Activated CD4-positive, alpha-beta T cell treated with anti-CD3 and anti-CD28 coated beads for 36 hours (primary cell): ENCODE measurements at regions of chr3 and their contacts with region 1.

Region 1: GRCh38 chr3:122609798-122610559 is 32.5 kb downstream of the PARP15 start:
- DNase-seq: peak; percentile 27
- ATAC-seq: peak; percentile 95
- H3K4me3 Mint-ChIP-seq: peak overlapping the region; percentile 25
- H3K27ac Mint-ChIP-seq: peak overlapping the region; percentile 85
- H3K4me1 Mint-ChIP-seq: peaks cover 24% of the 10 kb centered on the region
- H3K27me3 Mint-ChIP-seq: no peaks in the 10 kb centered on the region

Region 2: DNA sequence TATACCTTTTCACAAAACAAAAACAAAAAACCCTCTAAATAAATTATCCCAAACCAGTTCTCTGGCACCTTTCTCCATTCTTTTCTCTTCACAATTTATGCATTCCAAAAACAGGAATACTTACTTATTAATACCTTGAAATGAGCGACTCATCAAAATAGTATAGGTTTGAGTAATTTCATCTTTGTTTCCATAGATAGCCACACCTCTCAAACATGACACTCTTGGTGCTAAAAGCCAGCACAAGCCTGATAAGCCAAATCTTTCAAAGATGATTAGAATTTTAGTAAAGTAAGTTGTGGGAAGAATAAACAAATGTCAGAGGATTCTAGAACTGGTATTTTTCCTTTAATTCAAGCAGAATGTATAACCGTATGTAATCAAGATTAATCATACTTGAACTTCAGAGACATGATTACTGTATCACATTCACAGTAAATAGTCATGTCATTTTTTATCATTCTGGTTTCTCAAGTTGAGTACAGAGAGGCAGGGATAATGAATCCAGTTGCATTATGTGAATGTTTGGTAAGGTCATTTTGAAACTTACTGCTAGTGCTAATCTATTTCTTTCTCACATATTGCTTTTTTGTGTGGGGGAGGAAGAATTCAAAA is 182.0 kb before region 1 on chr3:
- CTCF ChIA-PET with region 1: no interaction called
- POLR2A ChIA-PET with region 1: no interaction called
- intact Hi-C with region 1: loop called in 1 of 2 experiments (anchors 1 kb)
- DNase-seq: no peak
- ATAC-seq: peak; percentile 93
- H3K4me3 Mint-ChIP-seq: no peak overlapping the region
- H3K27ac Mint-ChIP-seq: peak overlapping the region; percentile 70
- H3K4me1 Mint-ChIP-seq: peaks cover 18% of the 10 kb centered on the region
- H3K27me3 Mint-ChIP-seq: no peaks in the 10 kb centered on the region

Region 3: DNA sequence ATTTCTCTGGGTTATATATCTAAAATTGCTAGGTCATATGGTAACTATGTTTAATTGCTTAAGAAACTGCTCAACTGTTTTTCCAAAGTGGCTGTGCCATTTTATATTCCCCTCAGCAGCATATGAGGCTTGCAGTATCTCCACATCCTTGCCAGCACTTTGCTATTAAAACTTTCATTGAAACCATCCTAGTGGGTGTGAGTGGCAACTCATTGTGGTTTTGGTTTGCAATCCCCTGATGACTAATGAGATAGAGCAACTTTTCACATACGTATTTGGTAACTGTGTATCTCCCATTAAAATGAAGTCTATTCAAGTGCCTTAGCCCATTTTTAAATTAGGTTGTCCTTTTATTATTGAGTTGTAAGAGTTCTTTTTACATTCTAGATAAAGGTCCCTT is 112.6 kb before region 1 on chr3:
- CTCF ChIA-PET with region 1: no interaction called
- POLR2A ChIA-PET with region 1: no interaction called
- intact Hi-C with region 1: loop called in 1 of 2 experiments (anchors 2 kb)
- DNase-seq: peak; percentile 58
- ATAC-seq: peak; percentile 98
- H3K4me3 Mint-ChIP-seq: no peak overlapping the region
- H3K27ac Mint-ChIP-seq: no peak overlapping the region
- H3K4me1 Mint-ChIP-seq: peaks cover 50% of the 10 kb centered on the region
- H3K27me3 Mint-ChIP-seq: peaks cover 2% of the 10 kb centered on the region

Region 4: GRCh38 chr3:122564155-122564912 is 45.6 kb before region 1 on chr3 and contains the starts of genes DTX3L and PARP9:
- CTCF ChIA-PET with region 1: interaction called, 3 read pairs
- POLR2A ChIA-PET with region 1: no interaction called
- intact Hi-C with region 1: loop called (anchors 1 kb)
- DNase-seq: peak; percentile 89
- ATAC-seq: peak; percentile 83
- H3K4me3 Mint-ChIP-seq: peak within 1 kb of the TSS; percentile 83
- H3K27ac Mint-ChIP-seq: peak within 1 kb of the TSS; percentile 97
- H3K4me1 Mint-ChIP-seq: peaks cover 67% of the 10 kb centered on the region
- H3K27me3 Mint-ChIP-seq: no peaks in the 10 kb centered on the region
- total RNA-seq, gene DTX3L: 42.0 to 52.0 TPM
- total RNA-seq, gene PARP9: 39.9 to 46.0 TPM

Region 5: DNA sequence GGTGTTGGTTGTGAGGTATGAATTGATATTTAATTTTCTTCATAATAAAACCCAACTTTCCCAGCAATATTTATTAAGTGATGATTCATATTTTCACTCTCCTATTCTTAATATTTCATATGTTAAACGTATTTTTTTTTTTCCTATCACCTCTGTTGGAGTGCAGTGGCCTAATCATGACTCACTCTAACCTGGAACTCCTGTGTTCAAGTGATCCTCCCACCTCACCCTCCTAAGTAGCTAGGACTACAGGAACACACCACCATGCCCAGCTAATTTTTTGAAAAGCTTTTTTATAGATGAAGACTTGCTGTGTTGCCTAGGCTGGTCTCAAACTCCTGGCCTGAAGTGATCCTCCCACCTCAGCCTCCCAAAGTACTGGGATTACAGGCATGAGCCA is 23.9 kb before region 1 on chr3:
- CTCF ChIA-PET with region 1: no interaction called
- POLR2A ChIA-PET with region 1: no interaction called
- intact Hi-C with region 1: loop called (anchors 1 to 2 kb)
- DNase-seq: no peak
- ATAC-seq: peak; percentile 42
- H3K4me3 Mint-ChIP-seq: no peak overlapping the region
- H3K27ac Mint-ChIP-seq: no peak overlapping the region
- H3K4me1 Mint-ChIP-seq: peaks cover 38% of the 10 kb centered on the region
- H3K27me3 Mint-ChIP-seq: no peaks in the 10 kb centered on the region

Region 6: DNA sequence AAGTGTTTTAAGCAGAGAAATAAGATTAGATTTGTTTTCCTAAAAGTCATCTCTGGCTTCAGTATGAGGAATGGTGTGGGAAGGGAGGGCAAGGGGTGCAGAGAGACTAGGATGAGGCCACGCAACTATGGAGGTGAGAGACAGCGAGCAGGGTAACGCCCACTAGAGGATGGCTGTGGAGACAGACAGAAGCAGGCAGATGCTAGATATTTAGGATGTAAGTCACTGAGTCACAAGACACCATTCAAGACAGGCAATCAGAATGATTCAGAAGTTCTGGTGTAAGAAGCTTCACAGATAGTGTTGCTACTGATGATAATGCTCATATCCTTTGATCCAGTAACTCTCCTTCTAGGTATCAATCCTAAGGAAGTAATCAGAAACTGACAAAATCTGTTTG is 164.6 kb after region 1 on chr3:
- CTCF ChIA-PET with region 1: no interaction called
- POLR2A ChIA-PET with region 1: no interaction called
- intact Hi-C with region 1: no loop called
- DNase-seq: peak; percentile 25
- ATAC-seq: peak; percentile 97
- H3K4me3 Mint-ChIP-seq: no peak overlapping the region
- H3K27ac Mint-ChIP-seq: no peak overlapping the region
- H3K4me1 Mint-ChIP-seq: no peaks in the 10 kb centered on the region
- H3K27me3 Mint-ChIP-seq: no peaks in the 10 kb centered on the region